ENCODE measurements at regions of chr19 and their contacts with region 1.

Region 1: DNA sequence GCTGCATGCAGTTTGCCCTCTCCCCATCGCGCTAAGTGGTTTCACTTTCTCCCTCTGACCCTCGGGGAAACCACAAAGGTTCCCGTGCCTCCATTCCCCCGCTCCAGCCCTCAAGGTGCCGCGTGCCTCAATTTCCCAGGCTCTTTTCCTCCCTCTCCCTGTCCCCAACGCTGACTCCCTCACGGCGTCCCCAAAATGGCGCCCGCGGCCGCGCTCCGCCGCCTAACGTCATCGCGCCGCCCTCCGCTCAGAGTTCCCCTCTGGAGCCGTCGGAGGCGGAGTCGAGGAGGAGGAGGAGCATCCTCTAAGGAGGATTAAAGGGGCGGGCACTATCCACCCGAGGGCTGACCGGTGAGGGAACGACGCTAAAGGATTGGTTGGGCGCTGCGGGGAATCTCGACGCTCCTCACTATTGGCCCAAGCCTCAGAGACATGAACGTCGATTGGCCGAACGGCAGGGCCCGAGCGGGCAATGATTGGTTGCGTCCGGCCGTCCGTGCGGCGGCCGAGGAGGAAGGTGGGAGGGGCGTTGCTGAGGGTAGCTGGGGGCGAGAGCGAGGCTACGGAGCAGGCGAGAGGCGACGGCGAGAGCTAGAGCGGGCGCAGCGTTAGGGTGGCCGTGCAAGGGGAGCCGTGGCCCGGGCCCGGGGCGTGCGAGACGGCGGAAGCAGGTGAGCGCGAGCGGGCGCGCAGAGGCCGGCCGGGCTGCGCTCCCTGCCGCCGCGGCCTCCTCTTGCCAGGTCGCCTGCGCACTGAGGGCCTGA is at the start of gene ZNF574:
- DNase-seq: peak; percentile 96 to 99
- H3K4me3 ChIP-seq: peak within 1 kb of the TSS; percentile 75 to 84
- H3K27ac ChIP-seq: peak within 1 kb of the TSS; percentile 93
- H3K4me1 ChIP-seq: peaks cover 5 to 15% of the 10 kb centered on the region in 2 donors
- H3K27me3 ChIP-seq: no peaks in the 10 kb centered on the region
- CTCF ChIP-seq: no peak
- total RNA-seq, gene ZNF574: 14.9 TPM

Region 2: DNA sequence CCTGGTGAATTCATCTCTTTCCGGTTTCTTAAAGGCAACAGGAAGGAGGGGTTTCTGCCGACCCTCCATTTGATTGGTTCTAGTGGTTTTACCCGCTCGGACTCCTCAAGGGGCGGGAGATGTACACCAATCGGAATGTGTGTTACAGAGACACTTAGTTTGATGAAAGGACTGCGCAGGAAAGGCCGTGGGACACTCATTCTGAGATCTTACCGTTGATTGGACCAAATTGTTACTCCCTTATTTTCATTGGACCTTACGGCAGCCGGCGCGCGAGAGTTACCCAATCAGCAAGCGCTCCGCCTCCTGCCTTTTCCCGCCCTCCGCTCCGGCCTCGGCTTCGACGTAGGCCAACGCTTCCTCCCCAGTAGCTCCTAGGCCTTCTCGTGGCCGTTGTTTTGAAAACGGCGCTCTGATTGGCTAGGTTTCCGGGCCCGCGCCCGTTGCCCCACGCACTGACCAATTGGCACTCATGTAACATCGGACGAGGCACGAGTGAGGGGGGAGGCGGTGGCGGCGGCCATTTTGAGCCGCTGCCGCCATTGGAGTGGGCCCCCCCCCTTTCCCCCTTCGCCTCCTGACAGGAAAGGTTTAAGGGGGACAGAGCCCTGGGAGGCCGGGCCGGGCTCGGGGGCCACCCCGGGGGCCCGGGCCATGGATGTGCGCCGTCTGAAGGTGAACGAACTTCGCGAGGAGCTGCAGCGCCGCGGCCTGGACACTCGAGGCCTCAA is 811.8 kb before region 1 on chr19 and contains the start of gene HNRNPUL1:
- intact Hi-C with region 1: loop called (anchors 10 kb)
- DNase-seq: peak; percentile 97 to 99
- H3K4me3 ChIP-seq: peak within 1 kb of the TSS; percentile 81 to 82
- H3K27ac ChIP-seq: peak within 1 kb of the TSS; percentile 94 to 98
- H3K4me1 ChIP-seq: peaks cover 9 to 22% of the 10 kb centered on the region in 2 donors
- H3K27me3 ChIP-seq: no peaks in the 10 kb centered on the region
- CTCF ChIP-seq: peak; percentile 25 to 44 (median 40)
- total RNA-seq, gene HNRNPUL1: 81.1 TPM

Region 3: GRCh38 chr19:41439441-41440222 is 636.2 kb before region 1 on chr19 and contains the start of gene DMAC2:
- intact Hi-C with region 1: loop called (anchors 10 kb)
- DNase-seq: peak; percentile 90 to 99
- H3K4me3 ChIP-seq: peak within 1 kb of the TSS; percentile 66 to 78
- H3K27ac ChIP-seq: peak within 1 kb of the TSS; percentile 90 to 92
- H3K4me1 ChIP-seq: no peaks in the 10 kb centered on the region
- H3K27me3 ChIP-seq: no peaks in the 10 kb centered on the region
- CTCF ChIP-seq: peak in 2 of 3 experiments; percentile 51 to 61
- total RNA-seq, gene DMAC2: 21.2 TPM

Region 4: GRCh38 chr19:41883821-41884733 is 191.7 kb before region 1 on chr19:
- intact Hi-C with region 1: loop called (anchors 5 kb)
- DNase-seq: peak; percentile 84 to 97
- H3K4me3 ChIP-seq: peak overlapping the region; percentile 91 to 100
- H3K27ac ChIP-seq: peak overlapping the region in 1 of 2 donors; percentile 90
- H3K4me1 ChIP-seq: peaks cover 12% of the 10 kb centered on the region in 2 donors
- H3K27me3 ChIP-seq: no peaks in the 10 kb centered on the region
- CTCF ChIP-seq: no peak

Region 5: GRCh38 chr19:42219812-42220750 is 144.3 kb after region 1 on chr19 and contains the start of gene ZNF526:
- intact Hi-C with region 1: loop called (anchors 5 kb)
- DNase-seq: peak; percentile 94 to 98
- H3K4me3 ChIP-seq: peak within 1 kb of the TSS; percentile 61 to 93
- H3K27ac ChIP-seq: peak within 1 kb of the TSS; percentile 84 to 90
- H3K4me1 ChIP-seq: peaks cover 0 to 34% of the 10 kb centered on the region in 2 donors
- H3K27me3 ChIP-seq: no peaks in the 10 kb centered on the region
- CTCF ChIP-seq: no peak
- total RNA-seq, gene ZNF526: 7.0 TPM

Region 6: DNA sequence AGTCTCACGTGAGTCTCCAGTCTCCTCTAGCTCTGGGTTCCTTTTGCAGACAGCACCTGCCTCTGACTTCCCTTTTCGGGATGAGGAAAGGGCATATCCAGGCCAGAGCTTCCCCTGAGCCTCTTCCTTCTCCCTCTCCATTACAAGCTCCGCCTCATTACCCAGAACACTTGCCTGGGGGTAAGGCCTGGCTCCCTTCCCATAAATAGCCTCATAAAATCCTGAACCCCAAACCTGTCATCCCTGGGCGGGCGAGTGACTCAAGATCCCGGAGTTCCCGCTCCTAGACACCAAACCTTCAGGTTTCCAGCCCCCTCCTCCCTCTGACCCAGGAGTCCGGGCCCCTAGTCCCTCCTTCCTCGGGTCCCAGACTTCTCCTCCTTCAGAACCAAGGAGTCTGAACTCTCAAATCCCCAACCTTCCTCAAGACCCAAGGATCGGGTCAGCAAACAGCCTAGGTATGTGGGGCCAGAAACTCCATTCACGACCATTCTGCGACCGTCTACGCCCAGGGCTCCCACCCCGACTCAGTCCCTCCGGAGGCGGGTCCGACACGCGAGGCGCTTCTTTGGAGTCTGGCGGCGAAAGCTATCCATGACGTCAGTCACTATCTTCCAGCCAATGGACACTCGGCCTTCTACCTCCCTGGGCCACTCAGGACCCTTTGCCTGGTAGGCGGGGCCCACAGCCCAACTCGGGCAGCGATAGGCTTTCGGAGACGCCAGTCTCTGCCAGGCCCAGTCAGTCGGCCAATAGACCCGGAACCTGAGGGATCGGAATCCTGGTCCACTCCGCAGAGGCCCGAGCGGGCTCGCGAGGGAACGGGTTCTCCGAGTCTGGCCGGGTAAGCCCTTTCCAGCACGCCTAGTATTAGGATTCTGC is 320.8 kb after region 1 on chr19:
- intact Hi-C with region 1: loop called (anchors 5 kb)
- DNase-seq: peak; percentile 98 to 99
- H3K4me3 ChIP-seq: peak overlapping the region; percentile 54 to 68
- H3K27ac ChIP-seq: peak overlapping the region; percentile 70 to 76
- H3K4me1 ChIP-seq: peaks cover 7 to 14% of the 10 kb centered on the region in 2 donors
- H3K27me3 ChIP-seq: no peaks in the 10 kb centered on the region
- CTCF ChIP-seq: no peak